ENCODE measurements at regions of chr20 and their contacts with region 1.

Region 1: DNA sequence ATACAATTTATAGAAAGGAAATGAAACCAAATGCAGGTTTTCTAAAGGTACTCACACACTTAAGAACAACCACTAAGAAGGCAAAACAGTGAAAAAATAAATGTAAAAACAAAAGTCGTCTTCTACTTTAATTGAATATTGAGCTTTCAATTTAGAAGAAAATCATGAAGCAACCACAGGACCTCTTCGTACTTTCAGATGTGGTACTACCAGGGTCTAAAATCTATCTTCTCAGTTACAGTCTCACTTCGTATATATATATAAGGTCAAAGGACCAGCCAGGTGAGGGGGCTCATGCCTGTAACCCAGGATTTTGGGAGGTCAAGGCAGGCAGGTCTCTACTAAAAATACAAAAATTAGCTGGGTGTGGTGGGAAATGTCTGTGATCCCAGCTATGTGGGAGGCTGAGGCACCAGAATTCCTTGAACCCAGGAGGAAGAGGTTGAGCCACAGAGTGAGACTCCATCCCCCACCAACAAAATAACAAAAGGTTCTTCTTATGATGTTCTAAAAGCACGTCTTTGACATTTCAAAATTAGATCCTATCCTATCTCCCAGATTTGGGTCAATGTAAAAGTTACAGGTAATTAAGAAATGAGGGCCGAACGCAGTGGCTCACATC is 12.5 kb downstream of the ROMO1 start:
- DNase-seq: no peak
- H3K4me3 Mint-ChIP-seq: peak overlapping the region; percentile 42
- H3K27ac Mint-ChIP-seq: peak overlapping the region; percentile 68
- H3K4me1 Mint-ChIP-seq: peaks cover 38% of the 10 kb centered on the region
- H3K27me3 Mint-ChIP-seq: no peaks in the 10 kb centered on the region

Region 2: GRCh38 chr20:35592339-35592974 is 119.2 kb before region 1 on chr20:
- intact Hi-C with region 1: no loop called
- DNase-seq: no peak
- H3K4me3 Mint-ChIP-seq: no peak overlapping the region
- H3K27ac Mint-ChIP-seq: no peak overlapping the region
- H3K4me1 Mint-ChIP-seq: no peaks in the 10 kb centered on the region
- H3K27me3 Mint-ChIP-seq: peaks cover 14% of the 10 kb centered on the region

Region 3: DNA sequence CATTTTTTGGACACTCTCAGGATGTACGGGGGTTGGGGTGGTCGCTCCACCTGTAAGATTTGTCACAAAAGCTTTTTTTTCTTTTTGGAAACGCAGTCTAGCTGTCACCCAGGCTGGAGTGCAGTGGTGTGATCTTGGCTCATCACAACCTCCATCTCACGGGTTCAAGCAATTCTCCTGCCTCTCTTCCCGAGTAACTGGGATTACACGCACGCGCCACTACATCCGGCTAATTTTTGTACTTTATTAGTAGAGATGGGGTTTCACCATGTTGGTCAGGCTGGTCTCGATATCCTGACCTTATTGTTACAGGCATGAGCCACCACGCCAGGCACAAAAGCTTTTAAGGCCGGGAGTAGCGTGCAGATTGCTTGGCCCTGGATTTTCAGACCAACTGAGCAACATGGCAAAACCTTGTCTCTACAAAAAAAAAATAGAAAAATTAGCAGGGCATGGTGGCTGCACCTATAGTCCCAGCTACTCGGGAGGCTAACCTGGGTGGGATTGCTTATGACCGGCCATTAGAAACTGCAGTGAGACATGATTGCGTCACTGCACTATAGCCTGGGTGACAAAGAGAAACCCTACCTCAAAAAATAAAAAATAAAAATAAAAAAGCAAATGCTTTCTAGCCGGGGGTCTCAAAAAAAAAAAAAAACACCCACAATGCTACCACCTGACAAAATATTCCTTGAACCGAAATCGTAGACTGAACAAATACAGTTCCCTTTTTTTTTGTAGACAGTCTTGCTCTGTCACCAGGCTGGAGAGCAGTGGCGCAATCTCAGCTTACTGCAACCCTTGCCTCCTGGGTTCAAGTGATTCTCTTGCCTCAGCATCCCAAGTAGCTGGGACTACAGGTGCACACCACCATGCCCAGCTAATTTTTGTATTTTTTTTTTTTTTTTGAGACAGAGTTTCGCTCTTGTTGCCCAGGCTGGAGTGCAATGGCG is 15.3 kb after region 1 on chr20:
- intact Hi-C with region 1: loop called (anchors 2 kb)
- DNase-seq: no peak
- H3K4me3 Mint-ChIP-seq: no peak overlapping the region
- H3K27ac Mint-ChIP-seq: no peak overlapping the region
- H3K4me1 Mint-ChIP-seq: peaks cover 18% of the 10 kb centered on the region
- H3K27me3 Mint-ChIP-seq: no peaks in the 10 kb centered on the region